ENCODE measurements at regions of chr1 and their contacts with region 1.

Region 1: GRCh38 chr1:201149400-201149799 is 4.9 kb downstream of the TMEM9 start:
- DNase-seq: no peak
- ATAC-seq: peak; percentile 45 to 49
- H3K4me3 ChIP-seq: no peak overlapping the region
- H3K27ac ChIP-seq: no peak overlapping the region
- H3K4me1 ChIP-seq: peaks cover 16 to 28% of the 10 kb centered on the region in 2 donors
- H3K27me3 ChIP-seq: no peaks in the 10 kb centered on the region
- CTCF ChIP-seq: peak; percentile 49 to 58 (median 53)
- POLR2A ChIP-seq: no peak

Region 2: DNA sequence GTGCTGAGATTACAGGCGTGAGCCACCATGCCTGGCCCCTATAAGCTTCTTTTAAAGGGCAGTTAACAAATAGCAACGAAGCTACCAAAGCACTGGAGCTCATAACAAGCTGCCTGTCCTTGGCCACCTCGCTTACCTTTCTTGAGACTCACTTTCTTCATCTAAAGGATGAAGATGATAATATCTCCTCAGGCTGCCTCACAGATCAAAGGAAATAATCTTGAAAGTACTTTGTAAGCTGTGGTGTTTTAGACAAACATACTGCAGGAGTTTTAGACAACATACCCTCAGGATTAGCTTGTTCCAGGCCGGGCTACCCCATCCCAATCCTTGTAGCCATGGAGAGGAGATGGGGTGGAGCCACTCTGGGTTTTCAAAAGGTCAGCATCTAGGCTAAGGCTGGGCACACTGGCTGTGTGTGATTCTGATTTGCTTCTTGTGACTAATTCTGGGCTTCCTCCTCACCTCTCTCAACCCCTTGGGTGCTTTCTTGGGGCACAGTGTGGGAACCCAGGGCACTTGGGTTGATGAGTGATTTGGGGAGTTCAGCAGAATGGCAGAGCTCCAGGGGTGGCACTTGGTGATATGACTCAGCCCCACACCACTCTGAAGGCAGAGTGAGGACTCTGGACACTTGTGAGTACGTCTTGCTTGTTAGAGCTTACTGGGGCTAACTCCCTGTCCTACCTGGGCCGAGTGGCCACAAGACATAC is 271.4 kb before region 1 on chr1:
- in situ Hi-C with region 1: no loop called
- intact Hi-C with region 1: no loop called
- DNase-seq: no peak
- ATAC-seq: no peak
- H3K4me3 ChIP-seq: no peak overlapping the region
- H3K27ac ChIP-seq: no peak overlapping the region
- H3K4me1 ChIP-seq: peaks cover 3 to 7% of the 10 kb centered on the region in 2 donors
- H3K27me3 ChIP-seq: peaks cover 14 to 26% (median 17%) of the 10 kb centered on the region in 3 donors
- CTCF ChIP-seq: no peak
- POLR2A ChIP-seq: no peak

Region 3: DNA sequence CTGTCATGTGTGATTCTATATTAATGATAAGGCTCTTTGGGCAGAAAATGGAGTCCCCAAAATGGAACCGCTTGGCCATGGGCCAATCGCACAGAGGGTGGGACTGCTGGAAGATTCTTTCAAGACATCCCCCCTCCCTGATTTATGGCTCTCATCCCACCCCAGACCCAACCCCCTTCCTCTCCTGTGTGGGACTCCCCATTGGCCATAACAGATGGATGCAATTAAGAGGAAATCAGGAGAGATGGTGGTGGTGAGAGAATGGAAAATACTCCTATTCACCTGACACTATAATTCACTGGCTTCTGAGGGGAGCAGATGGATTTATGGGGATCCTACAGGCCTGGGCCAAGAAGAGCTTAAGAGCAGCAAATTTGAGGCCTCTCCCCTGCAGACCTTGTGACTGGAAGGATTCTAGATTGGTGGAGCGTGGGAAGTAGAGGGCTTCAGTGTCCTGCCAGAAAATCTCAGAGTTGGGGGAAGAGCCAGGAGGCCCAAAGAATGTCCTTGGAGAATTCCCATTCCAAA is 42.9 kb after region 1 on chr1:
- in situ Hi-C with region 1: no loop called
- intact Hi-C with region 1: no loop called
- DNase-seq: peak in 1 of 2 donors; percentile 30
- ATAC-seq: peak in 1 of 2 donors; percentile 42
- H3K4me3 ChIP-seq: peak overlapping the region in 2 of 4 donors; percentile 6 to 19
- H3K27ac ChIP-seq: peak overlapping the region; percentile 41 to 80 (median 61)
- H3K4me1 ChIP-seq: peaks cover 12 to 18% of the 10 kb centered on the region in 2 donors
- H3K27me3 ChIP-seq: no peaks in the 10 kb centered on the region
- CTCF ChIP-seq: no peak
- POLR2A ChIP-seq: no peak

Region 4: DNA sequence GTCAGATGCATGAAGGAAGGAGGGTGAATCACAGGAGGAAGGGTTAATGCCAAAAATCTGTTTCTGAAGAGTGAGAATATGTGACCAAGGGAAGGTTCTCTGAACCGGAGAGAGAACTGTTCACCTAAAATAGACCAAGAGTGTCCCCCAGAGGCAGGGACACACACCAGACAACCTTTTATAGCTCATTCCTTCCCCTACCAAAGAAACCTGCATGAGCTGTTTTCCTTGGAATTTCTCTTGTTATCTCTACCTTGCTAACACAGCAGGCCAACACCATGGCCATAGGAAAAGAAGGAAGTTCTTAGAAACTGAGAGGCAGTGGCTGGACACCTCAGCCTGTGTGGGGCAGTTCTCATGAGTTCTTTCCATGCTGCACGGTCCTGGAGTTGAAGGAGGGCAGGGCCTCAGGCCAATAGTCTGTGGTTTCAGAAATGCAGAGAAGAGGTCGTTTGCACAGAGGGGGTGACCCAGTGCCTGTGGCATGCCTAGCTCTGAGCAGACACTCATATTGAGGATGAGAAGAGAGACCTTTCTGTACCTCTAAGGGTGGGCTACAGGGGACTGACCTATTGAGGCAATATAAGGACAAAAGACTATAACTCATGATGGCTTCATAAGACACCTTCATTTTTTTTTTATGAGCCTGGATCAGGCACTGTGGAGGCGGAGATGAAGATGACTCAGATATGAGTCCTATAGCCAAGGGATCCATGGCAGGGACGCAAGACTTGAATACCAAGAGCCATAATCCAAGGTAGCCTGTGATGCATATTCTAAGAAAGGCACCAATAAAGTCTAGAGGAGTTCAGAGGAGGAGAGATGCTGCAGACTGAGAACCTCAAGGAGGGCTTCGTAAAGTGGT is 80.6 kb after region 1 on chr1:
- in situ Hi-C with region 1: loop called in 1 of 4 experiments (anchors 10 kb)
- intact Hi-C with region 1: no loop called
- DNase-seq: no peak
- ATAC-seq: no peak
- H3K4me3 ChIP-seq: no peak overlapping the region
- H3K27ac ChIP-seq: no peak overlapping the region
- H3K4me1 ChIP-seq: no peaks in the 10 kb centered on the region
- H3K27me3 ChIP-seq: no peaks in the 10 kb centered on the region
- CTCF ChIP-seq: no peak
- POLR2A ChIP-seq: no peak

Measured in gastrocnemius medialis (tissue), 4 donors.